IMR-90 (cell line): ENCODE measurements at regions of chr13 and their contacts with region 1.

Region 1: GRCh38 chr13:21638319-21639282 is 32.3 kb upstream of the FGF9 start:
- DNase-seq: peak; percentile 4
- ATAC-seq: peak; percentile 53
- H3K4me3 ChIP-seq: no peak overlapping the region
- H3K27ac ChIP-seq: no peak overlapping the region; the same call in 1 of the 2 replicates
- H3K4me1 ChIP-seq: peaks cover 3% of the 10 kb centered on the region; the same call in 1 of the 2 replicates
- H3K27me3 ChIP-seq: peaks cover 2% of the 10 kb centered on the region
- CTCF ChIP-seq: peak; percentile 69
- POLR2A ChIP-seq: no peak
- RAD21 ChIP-seq: peak; percentile 72

Region 2: DNA sequence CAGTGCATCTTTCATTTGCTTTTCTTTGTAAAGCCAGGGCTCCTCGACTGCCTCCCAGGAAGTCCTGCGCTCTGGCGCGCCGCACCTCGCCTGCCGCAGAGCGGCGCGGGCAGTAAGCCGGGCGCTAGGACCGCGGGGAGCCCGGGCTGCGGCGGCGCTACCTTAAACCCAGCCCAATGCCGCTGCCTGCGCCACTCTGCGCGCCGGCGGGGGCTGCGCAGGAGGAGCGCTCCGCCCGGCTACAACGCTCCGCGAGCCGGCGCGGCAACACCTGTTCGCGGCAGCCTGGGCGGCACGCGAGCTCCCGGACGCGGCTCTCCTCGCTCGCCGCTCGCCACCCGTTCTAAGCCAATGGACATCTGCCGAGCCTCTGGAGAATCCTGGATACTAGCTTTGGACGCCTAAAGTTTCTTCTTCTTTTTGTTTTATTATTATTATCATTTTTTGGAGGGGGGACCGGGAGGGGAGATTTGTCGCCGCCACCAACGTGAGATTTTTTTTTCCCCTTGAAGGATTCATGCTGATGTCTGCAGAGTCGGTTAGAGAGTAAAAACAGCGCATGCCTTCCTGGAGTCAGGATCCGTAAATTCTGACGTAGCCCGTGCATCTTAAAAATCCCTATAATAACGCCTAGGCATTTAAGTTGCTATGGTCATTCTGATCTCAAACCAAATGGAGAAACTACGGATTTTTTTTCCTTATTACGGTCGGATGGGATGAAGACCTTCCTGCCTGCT is 32.5 kb after region 1 on chr13 and contains the start of gene FGF9:
- CTCF ChIA-PET with region 1: no interaction called
- POLR2A ChIA-PET with region 1: no interaction called
- dilution Hi-C with region 1: no loop called
- in situ Hi-C with region 1: no loop called
- intact Hi-C with region 1: loop called (anchors 5 kb)
- DNase-seq: peak; percentile 79
- ATAC-seq: peak; percentile 68
- H3K4me3 ChIP-seq: peak within 1 kb of the TSS; percentile 61
- H3K27ac ChIP-seq: peak within 1 kb of the TSS; percentile 31
- H3K4me1 ChIP-seq: peaks cover 9% of the 10 kb centered on the region
- H3K27me3 ChIP-seq: peaks cover 34% of the 10 kb centered on the region
- CTCF ChIP-seq: peak; percentile 18; the same call in 1 of the 2 replicates
- POLR2A ChIP-seq: no peak
- RAD21 ChIP-seq: no peak
- total RNA-seq, gene FGF9: under 0.01 TPM in 2 replicates

Region 3: GRCh38 chr13:22187329-22187728 is 548.7 kb after region 1 on chr13:
- CTCF ChIA-PET with region 1: no interaction called
- POLR2A ChIA-PET with region 1: no interaction called
- dilution Hi-C with region 1: no loop called
- in situ Hi-C with region 1: no loop called
- intact Hi-C with region 1: loop called (anchors 5 kb)
- DNase-seq: peak; percentile 11
- ATAC-seq: peak; percentile 44
- H3K4me3 ChIP-seq: no peak overlapping the region
- H3K27ac ChIP-seq: no peak overlapping the region
- H3K4me1 ChIP-seq: no peaks in the 10 kb centered on the region
- H3K27me3 ChIP-seq: peaks cover 3% of the 10 kb centered on the region
- CTCF ChIP-seq: peak; percentile 31; the same call in 1 of the 2 replicates
- POLR2A ChIP-seq: no peak
- RAD21 ChIP-seq: peak; percentile 32; the same call in 1 of the 2 replicates

Region 4: DNA sequence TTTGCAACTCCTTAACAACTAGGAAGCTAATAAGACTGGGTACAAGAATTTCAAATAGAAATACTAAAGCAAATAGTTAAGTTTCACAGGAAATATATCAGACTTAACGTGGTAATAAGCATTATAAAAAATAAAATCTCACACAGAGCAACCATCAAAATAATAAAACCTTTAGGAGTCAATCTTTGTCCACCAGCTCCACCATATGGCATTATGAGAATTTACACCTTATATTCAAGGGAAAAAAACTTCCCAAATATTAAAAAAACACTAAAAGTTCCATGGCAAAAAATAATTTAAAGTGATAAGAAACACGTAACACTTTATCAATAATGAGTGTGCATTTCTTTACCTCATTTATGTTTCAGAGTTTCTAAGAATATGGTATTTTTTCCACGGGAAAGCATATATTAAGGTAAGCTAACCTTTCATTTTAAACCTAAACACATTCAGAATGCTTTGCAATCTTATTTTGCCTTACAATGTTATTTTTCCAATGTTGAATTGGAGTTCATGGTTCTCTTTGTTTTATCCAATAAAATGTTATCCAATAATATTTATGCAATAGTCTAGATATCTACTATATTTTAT is 1119.0 kb after region 1 on chr13:
- CTCF ChIA-PET with region 1: interaction called, 8 read pairs
- POLR2A ChIA-PET with region 1: no interaction called
- dilution Hi-C with region 1: no loop called
- in situ Hi-C with region 1: no loop called
- intact Hi-C with region 1: loop called (anchors 1 kb)
- DNase-seq: peak; percentile 7
- ATAC-seq: peak; percentile 57; the same call in 1 of the 2 replicates
- H3K4me3 ChIP-seq: no peak overlapping the region
- H3K27ac ChIP-seq: no peak overlapping the region
- H3K4me1 ChIP-seq: no peaks in the 10 kb centered on the region
- H3K27me3 ChIP-seq: no peaks in the 10 kb centered on the region
- CTCF ChIP-seq: peak; percentile 53
- POLR2A ChIP-seq: no peak
- RAD21 ChIP-seq: peak; percentile 62

Region 5: DNA sequence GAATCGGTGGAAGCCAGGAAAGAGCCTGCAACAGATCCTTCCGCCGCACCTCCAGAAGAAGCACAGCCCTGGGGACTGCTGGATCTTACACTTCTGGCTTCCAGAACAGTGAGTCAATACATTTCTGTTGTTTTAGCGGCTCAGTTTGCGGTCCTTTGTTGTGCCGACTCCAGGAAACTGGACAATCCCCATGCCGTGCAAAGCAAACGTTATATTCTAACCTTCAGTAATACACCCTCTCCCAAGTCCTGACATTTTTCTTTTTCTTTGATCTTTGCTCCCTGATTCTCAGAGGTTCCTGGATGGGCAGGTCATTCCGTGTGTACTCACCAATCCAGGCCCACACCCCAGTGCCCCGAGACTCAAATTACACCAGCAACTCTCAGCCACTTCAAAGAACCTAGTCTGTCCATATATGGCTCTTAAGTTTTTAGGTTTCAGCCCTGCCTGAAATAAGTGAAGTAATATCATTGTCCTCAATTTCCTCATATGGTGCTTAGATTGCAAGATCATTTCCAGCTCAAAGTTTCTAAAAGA is 1155.1 kb after region 1 on chr13:
- CTCF ChIA-PET with region 1: no interaction called
- POLR2A ChIA-PET with region 1: no interaction called
- dilution Hi-C with region 1: no loop called
- in situ Hi-C with region 1: loop called (anchors 25 kb)
- intact Hi-C with region 1: no loop called
- DNase-seq: no peak
- ATAC-seq: no peak
- H3K4me3 ChIP-seq: no peak overlapping the region
- H3K27ac ChIP-seq: no peak overlapping the region
- H3K4me1 ChIP-seq: no peaks in the 10 kb centered on the region
- H3K27me3 ChIP-seq: no peaks in the 10 kb centered on the region
- CTCF ChIP-seq: no peak
- POLR2A ChIP-seq: no peak
- RAD21 ChIP-seq: no peak

Region 6: GRCh38 chr13:23159230-23159759 is 1520.7 kb after region 1 on chr13:
- CTCF ChIA-PET with region 1: no interaction called
- POLR2A ChIA-PET with region 1: no interaction called
- dilution Hi-C with region 1: no loop called
- in situ Hi-C with region 1: loop called (anchors 25 kb)
- intact Hi-C with region 1: no loop called
- DNase-seq: peak; percentile 13
- ATAC-seq: peak; percentile 74
- H3K4me3 ChIP-seq: peak overlapping the region; percentile 17; the same call in 1 of the 2 replicates
- H3K27ac ChIP-seq: no peak overlapping the region
- H3K4me1 ChIP-seq: no peaks in the 10 kb centered on the region; the same call in 1 of the 2 replicates
- H3K27me3 ChIP-seq: peaks cover 19% of the 10 kb centered on the region
- CTCF ChIP-seq: peak; percentile 48
- POLR2A ChIP-seq: no peak
- RAD21 ChIP-seq: peak; percentile 19; the same call in 1 of the 2 replicates

Region 7: DNA sequence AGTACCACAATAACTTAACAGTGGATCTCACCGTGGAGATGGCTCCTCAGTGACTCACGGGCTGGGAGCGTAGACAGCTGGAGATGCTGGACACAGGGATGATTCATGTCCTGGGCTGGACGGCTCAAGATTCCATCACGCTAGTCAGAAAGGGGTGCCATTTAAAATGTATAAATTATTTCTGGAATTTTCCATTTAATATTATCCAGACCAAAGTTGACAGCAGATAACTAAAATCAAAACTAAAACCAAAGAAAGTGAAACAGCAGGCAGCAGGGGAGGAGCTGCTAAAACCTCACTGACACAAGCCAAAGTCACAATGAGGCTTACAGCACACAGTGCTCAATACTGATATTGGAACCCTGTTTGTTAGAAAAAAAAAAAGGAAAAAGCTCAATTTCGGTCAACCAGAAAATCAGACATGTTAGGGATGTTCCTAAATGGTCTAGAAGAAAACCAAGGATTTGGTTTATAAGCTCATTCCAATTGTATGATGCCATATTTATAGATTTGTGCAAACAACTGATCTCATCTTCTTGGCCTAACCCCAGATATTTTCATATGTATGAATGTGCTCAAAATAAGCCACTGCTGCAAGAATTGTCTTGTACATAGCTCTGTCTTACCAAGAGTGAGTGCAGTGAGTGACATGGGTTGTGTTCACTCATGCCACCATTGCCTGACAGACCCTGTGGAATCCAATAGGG is 1683.1 kb after region 1 on chr13:
- CTCF ChIA-PET with region 1: no interaction called
- POLR2A ChIA-PET with region 1: no interaction called
- dilution Hi-C with region 1: no loop called
- in situ Hi-C with region 1: loop called (anchors 25 kb)
- intact Hi-C with region 1: no loop called
- DNase-seq: peak; percentile 94
- ATAC-seq: peak; percentile 82
- H3K4me3 ChIP-seq: peak overlapping the region; percentile 32; the same call in 1 of the 2 replicates
- H3K27ac ChIP-seq: peak overlapping the region; percentile 97
- H3K4me1 ChIP-seq: peaks cover 20% of the 10 kb centered on the region
- H3K27me3 ChIP-seq: no peaks in the 10 kb centered on the region
- CTCF ChIP-seq: no peak
- POLR2A ChIP-seq: peak; percentile 36; the same call in 1 of the 2 replicates
- RAD21 ChIP-seq: no peak